ENCODE measurements at regions of chr7 and their contacts with region 1.

Region 1: GRCh38 chr7:37031571-37032257 is 307.4 kb upstream of the AOAH start:
- DNase-seq: peak; percentile 91
- H3K4me3 Mint-ChIP-seq: peak overlapping the region; percentile 14
- H3K27ac Mint-ChIP-seq: peak overlapping the region; percentile 89
- H3K4me1 Mint-ChIP-seq: peaks cover 39% of the 10 kb centered on the region
- H3K27me3 Mint-ChIP-seq: no peaks in the 10 kb centered on the region
- CTCF ChIP-seq: no peak

Region 2: DNA sequence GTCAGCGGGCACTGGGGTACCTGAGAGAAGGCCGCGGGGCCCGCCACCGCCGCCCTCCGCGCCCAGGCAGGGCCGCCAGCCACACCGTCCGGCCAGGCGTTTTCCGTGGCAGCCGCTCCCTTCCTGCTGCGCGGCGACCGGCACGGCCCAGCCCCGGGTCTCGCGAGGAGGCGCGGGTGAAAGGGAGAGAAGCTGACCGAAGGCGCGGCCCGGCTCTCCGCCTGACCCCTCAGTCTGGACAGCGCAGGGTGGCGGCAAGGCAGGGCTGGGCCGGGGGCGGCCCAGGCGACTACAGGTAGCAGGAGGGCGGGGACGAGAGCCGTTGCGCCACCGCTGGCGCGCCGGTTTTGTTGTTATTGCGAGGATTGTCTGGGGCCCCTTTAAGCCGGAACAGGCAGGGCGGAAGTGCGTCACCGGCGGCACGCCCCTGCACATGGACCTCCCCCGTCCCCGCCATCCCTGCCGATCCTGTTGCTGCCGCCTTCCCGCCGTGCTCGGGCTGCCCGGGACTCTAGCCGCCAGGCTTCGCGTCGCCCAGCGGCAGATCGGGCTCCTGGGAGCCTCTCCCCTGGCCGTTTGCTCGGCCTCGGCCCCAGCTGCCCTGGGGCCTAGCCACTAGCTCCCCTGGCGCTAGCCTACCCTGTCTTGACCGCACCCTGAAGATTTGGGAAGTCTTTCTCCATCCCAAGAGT is 1336.8 kb before region 1 on chr7 and contains the start of gene HERPUD2:
- CTCF ChIA-PET with region 1: no interaction called
- intact Hi-C with region 1: loop called (anchors 10 kb)
- DNase-seq: peak; percentile 99
- H3K4me3 Mint-ChIP-seq: peak within 1 kb of the TSS; percentile 100
- H3K27ac Mint-ChIP-seq: peak within 1 kb of the TSS; percentile 93
- H3K4me1 Mint-ChIP-seq: peaks cover 51% of the 10 kb centered on the region
- H3K27me3 Mint-ChIP-seq: no peaks in the 10 kb centered on the region
- CTCF ChIP-seq: no peak
- total RNA-seq, gene HERPUD2: 37.5 and 42.7 TPM in 2 replicates